HEK293 (cell line): ENCODE measurements at regions of chr15 and their contacts with region 1.

Region 1: DNA sequence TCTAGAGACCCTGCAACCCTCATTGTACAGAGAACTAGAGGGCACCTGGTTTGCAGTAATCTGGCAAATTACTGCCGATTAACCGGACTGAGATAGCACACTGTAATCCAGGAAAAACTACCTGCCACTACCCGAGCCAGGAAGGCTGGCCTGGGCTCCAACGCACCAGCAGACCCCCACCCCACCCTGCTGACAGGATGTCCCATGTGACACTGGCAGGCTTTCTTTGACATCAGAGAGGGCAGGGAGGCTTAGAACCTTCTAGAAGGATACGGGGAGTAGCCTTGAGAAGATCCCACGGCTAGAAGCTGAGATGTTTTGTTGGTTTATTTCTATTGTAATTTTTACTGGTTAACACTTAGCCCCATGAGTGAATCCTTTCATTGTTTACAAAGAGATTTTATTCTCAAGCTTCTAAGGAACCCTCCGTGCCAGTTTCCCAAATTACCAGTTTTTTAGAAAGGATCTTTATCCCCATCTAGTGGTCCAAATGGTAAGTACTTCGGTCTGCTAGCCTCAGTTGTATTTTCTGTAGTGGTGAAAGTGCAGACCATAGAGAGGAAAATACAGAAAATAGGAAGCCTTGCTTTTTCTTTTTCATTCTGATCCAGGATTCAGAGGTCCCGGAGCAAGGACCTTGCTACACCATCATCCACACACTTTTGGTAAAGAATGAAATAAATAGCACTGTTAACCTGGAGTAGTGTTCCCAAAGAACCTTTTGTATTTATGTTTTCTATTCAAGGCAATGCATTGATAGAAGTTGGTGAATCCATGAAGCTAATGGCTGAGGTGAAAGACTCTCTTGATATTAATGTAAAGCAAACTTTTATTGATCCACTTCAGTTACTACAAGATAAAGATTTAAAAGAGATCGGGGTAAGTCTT is 81.9 kb upstream of the ADAMTSL3 start:
- H3K4me3 ChIP-seq: no peak overlapping the region
- H3K27ac ChIP-seq: no peak overlapping the region
- H3K4me1 ChIP-seq: no peaks in the 10 kb centered on the region
- CTCF ChIP-seq: no peak

Region 2: DNA sequence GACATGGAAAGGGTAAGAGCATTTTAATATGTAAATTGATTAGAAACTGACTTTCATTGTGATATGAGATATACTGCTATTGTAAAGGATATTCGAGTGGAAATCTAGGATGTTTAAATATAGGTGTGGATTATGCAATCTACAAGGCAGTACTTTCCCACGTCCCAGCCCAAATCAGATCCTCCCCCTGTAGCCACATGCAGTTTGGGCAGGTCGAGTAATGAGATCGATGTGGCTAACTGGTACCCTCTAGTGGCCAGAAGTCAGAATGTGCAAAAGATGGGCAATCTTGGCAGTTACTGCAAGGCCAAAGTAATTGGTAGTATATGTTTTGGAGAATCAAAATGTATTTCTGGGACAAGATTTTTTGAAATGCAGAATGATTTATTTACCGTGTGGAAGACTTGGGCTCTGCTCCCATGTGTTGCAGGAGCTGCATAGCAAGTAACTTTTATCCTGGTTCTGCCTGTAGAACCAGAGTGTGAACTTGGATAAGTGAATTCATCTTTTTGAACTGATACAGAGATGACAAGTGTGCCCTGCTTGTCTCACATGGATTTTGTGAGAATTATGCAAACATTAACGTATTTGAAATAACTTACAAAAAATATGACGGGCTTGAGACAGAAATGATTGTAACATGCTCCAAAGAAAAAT is 12.6 kb before region 1 on chr15:
- CTCF ChIA-PET with region 1: interaction called, 25 read pairs
- POLR2A ChIA-PET with region 1: no interaction called
- H3K4me3 ChIP-seq: no peak overlapping the region
- H3K27ac ChIP-seq: no peak overlapping the region
- H3K4me1 ChIP-seq: no peaks in the 10 kb centered on the region
- CTCF ChIP-seq: peak; percentile 69; the same call in 1 of the 2 replicates

Region 3: DNA sequence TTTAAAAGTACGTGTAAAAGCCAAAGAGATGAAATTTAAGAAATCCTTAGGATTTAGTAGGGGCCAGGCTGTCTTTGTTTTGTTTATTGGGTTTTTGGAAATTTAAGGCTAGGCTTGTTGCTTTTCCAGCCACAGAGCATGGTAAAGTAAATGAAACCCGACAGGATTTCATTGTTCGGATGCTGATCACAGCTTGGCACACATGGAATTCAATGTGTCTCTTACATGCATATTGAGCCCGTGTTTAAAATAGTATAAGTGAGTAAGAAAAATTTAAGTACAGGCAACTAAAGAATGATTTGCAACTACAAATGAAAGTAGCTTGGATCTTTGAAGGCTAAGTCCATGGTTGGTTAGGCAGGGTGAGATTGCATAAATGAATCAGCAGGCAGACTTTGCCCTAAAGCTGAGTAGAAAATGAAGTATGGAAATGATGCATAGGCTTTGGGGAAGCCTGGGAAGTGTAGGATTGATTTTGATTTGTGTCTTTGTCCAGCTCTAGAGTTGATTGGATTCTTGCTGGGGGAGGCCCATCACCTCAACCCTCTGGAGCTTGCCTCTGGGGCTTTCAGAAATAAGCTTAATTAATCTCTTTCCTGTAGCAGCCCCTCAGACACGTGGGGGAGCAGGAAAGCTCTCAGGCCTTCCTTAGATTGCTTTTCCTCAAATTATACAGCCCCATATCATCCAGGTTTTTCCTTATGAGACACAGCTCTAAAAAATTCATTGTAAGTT is 13.7 kb after region 1 on chr15:
- CTCF ChIA-PET with region 1: interaction called, 11 read pairs
- POLR2A ChIA-PET with region 1: no interaction called
- H3K4me3 ChIP-seq: no peak overlapping the region
- H3K27ac ChIP-seq: no peak overlapping the region
- H3K4me1 ChIP-seq: no peaks in the 10 kb centered on the region
- CTCF ChIP-seq: no peak

Region 4: GRCh38 chr15:83747050-83747717 is 175.1 kb after region 1 on chr15:
- CTCF ChIA-PET with region 1: interaction called, 15 read pairs
- POLR2A ChIA-PET with region 1: no interaction called
- H3K4me3 ChIP-seq: no peak overlapping the region
- H3K27ac ChIP-seq: no peak overlapping the region
- H3K4me1 ChIP-seq: no peaks in the 10 kb centered on the region
- CTCF ChIP-seq: peak; percentile 43; the same call in 1 of the 2 replicates